GM18951 (cell line): ENCODE measurements at regions of chr16 and their contacts with region 1.

Region 1: DNA sequence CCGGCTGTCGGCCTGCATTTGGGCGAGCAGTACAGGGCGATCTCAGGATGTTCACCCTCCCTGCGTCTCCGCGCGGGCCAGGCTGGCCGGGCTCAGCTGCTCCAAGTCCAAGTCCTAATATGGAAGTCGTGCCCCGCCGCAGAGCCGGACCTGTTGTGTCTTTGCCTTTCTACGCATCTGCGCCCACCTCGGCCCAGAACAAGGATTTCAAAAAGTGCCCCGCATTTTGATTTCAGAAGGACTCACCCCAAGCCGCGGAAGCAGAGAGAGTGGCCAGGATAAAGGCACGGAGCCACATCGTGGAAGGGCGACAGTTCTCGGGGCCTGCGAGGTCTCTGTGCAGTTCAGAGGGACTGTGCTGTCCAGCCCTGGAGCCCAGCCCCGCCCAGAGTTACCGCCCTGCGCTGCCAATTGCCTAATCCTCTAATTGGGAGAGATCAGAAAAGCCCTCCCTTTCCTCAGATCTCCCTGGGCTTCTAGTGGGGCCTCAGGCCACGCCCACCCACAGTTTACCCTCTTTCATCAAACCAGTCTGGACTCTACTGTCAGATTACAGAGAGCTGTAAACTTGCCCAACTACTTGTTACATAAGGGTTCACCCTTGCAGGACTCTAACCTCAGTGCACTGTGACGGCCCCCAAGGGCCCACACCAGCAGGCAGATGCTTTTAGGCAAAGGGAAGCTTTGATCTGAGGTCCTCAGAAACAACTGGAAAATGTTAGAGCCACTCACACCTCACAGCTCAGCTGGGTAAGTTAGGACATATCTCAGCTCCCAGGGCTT is at the start of gene CES1:
- POLR2A ChIP-seq: no peak

Region 2: DNA sequence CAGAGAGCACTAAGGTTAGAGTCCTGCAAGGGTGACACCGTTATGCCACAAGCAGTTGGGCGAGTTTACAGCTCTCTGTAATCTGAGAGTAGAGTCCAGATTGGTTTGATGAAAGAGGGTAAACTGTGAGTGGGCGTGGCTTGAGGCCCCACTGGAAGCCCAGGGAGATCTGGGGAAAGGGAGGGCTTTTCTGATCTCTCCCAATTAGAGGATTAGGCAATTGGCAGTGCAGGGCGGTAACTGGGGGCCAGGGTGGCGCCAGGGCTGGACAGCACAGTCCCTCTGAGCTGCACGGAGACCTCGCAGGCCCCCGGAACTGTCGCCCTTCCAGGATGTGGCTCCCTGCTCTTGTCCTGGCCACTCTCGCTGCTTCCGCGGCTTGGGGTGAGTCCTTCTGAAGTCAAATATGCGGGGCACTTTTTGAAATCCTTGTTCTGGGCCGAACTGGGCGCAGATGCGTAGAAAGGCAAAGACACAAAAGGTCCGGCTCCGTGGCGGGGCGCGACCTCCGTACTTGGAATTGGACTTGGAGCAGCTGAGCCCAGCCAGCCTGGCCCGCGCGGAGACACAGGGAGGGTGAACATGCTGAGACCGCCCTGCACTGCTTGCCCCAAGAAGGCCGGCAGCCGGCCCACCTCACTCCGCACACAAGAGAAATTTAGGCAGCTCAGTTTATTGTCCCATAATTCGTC is 72.5 kb before region 1 on chr16:
- in situ Hi-C with region 1: loop called (anchors 5 kb)
- POLR2A ChIP-seq: no peak